Endothelial cell of umbilical vein (primary cell): ENCODE measurements at regions of chr12 and their contacts with region 1.

Region 1: GRCh38 chr12:98733667-98734350 is 88.7 kb downstream of the APAF1 start:
- DNase-seq: peak; percentile 17
- H3K4me3 ChIP-seq: no peak overlapping the region
- H3K27ac ChIP-seq: no peak overlapping the region
- H3K4me1 ChIP-seq: peaks cover 12% of the 10 kb centered on the region
- H3K27me3 ChIP-seq: no peaks in the 10 kb centered on the region
- CTCF ChIP-seq: no peak
- POLR2A ChIP-seq: no peak

Region 2: GRCh38 chr12:98635657-98636323 is 98.0 kb before region 1 on chr12:
- CTCF ChIA-PET with region 1: no interaction called
- POLR2A ChIA-PET with region 1: no interaction called
- dilution Hi-C with region 1: no loop called
- intact Hi-C with region 1: no loop called
- DNase-seq: peak; percentile 61
- H3K4me3 ChIP-seq: no peak overlapping the region
- H3K27ac ChIP-seq: peak overlapping the region; percentile 10
- H3K4me1 ChIP-seq: peaks cover 27% of the 10 kb centered on the region
- H3K27me3 ChIP-seq: no peaks in the 10 kb centered on the region
- CTCF ChIP-seq: no peak
- POLR2A ChIP-seq: no peak

Region 3: GRCh38 chr12:98968896-98969295 is 235.1 kb after region 1 on chr12:
- CTCF ChIA-PET with region 1: no interaction called
- POLR2A ChIA-PET with region 1: interaction called, 17 read pairs
- dilution Hi-C with region 1: no loop called
- intact Hi-C with region 1: no loop called
- DNase-seq: no peak
- H3K4me3 ChIP-seq: no peak overlapping the region
- H3K27ac ChIP-seq: no peak overlapping the region
- H3K4me1 ChIP-seq: no peaks in the 10 kb centered on the region
- H3K27me3 ChIP-seq: no peaks in the 10 kb centered on the region
- CTCF ChIP-seq: no peak
- POLR2A ChIP-seq: no peak

Region 4: DNA sequence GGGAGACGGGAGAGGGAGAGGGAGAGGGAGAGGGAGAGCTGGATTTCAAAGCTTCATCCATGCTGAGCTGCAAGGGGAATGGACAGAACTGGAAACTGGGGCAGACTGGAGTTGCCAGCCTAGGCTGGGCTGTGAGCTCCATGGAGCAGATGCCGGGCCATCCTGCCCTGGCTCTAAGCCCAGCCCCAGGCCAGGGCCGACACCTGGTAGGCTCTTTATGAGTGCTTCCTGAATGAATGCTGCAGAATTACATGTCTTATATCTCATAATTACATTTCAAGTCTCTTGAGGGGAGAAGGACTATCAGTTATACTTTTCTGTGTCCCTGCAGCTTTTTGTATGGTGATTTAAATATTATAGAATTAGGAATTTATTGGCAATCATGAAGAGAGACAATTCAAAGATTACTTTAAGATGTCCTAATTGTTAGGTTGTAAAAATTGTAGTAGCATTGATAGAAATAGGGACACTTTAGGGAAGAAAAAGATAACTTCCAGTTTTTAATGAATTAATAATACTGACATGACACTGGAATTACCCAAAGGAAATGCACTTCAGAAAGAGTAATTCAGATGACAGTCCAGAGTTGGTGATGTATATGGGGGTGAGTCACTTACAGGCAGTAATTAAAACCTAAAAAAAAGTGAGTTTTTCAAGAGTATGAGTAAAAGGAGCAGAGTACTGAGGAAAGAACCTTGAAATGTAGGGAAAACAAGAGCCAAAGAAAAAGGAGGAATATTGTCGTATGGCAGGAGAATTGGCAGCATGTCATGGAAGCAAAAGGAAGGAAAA is 1562.2 kb after region 1 on chr12:
- CTCF ChIA-PET with region 1: no interaction called
- POLR2A ChIA-PET with region 1: no interaction called
- dilution Hi-C with region 1: no loop called
- intact Hi-C with region 1: no loop called
- DNase-seq: peak; percentile 29
- H3K4me3 ChIP-seq: no peak overlapping the region
- H3K27ac ChIP-seq: no peak overlapping the region
- H3K4me1 ChIP-seq: no peaks in the 10 kb centered on the region
- H3K27me3 ChIP-seq: no peaks in the 10 kb centered on the region
- CTCF ChIP-seq: no peak
- POLR2A ChIP-seq: no peak